IMR-90 (cell line): ENCODE measurements at regions of chr3 and their contacts with region 1.

Region 1: GRCh38 chr3:178443634-178444033 is 92.6 kb upstream of the KCNMB2 start:
- DNase-seq: no peak
- ATAC-seq: no peak; the same call in 1 of the 2 replicates
- H3K4me3 ChIP-seq: no peak overlapping the region
- H3K27ac ChIP-seq: no peak overlapping the region
- H3K4me1 ChIP-seq: no peaks in the 10 kb centered on the region
- H3K27me3 ChIP-seq: peaks cover 2% of the 10 kb centered on the region; the same call in 1 of the 2 replicates
- CTCF ChIP-seq: no peak
- POLR2A ChIP-seq: no peak
- RAD21 ChIP-seq: no peak

Region 2: DNA sequence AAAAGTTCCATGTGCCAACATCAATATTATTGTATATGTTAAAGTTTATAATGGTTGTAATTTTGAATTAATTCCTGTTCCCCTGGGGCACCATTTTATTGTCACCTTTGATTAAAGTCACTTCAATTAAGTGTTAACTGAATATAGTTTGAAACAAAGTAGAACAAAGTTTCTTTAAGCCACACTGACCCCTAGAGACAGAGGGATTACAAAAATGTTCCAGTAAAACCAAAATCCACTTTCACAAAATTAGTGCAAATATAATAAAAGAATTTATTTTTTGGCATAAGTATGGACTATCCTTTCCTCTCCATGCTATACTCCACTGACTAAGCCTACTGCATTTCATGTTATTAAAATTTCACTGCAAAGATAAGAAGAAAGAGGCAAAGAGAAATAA is 504.1 kb after region 1 on chr3:
- CTCF ChIA-PET with region 1: interaction called, 3 read pairs
- POLR2A ChIA-PET with region 1: no interaction called
- dilution Hi-C with region 1: no loop called
- in situ Hi-C with region 1: loop called (anchors 10 kb)
- intact Hi-C with region 1: loop called (anchors 5 kb)
- DNase-seq: no peak
- ATAC-seq: no peak
- H3K4me3 ChIP-seq: no peak overlapping the region
- H3K27ac ChIP-seq: no peak overlapping the region
- H3K4me1 ChIP-seq: no peaks in the 10 kb centered on the region
- H3K27me3 ChIP-seq: no peaks in the 10 kb centered on the region
- CTCF ChIP-seq: 0 out of 2 replicates have a peak, but pooled peaks have one; percentile 16
- POLR2A ChIP-seq: no peak
- RAD21 ChIP-seq: no peak

Region 3: DNA sequence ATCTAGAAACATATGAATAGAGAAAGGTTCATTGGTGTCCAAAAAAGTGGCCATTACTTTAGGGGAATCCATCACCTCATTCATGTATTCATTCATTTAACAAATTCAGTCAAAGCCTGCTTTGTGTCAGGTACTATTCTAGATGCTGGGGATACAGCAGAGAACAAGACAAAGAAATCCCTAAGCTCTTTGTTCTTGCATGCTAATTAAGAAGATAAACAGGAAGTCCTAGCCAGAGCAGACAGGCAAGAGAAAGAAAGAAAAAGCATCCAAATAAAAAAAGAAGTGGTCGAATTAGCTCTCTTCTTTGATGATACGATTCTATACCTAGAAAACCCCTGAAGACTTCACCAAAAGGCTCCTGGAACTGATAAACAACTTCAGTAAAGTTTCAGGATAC is 640.3 kb after region 1 on chr3:
- CTCF ChIA-PET with region 1: no interaction called
- POLR2A ChIA-PET with region 1: no interaction called
- dilution Hi-C with region 1: no loop called
- in situ Hi-C with region 1: no loop called
- intact Hi-C with region 1: no loop called
- DNase-seq: no peak
- ATAC-seq: no peak
- H3K4me3 ChIP-seq: no peak overlapping the region
- H3K27ac ChIP-seq: no peak overlapping the region
- H3K4me1 ChIP-seq: no peaks in the 10 kb centered on the region
- H3K27me3 ChIP-seq: no peaks in the 10 kb centered on the region
- CTCF ChIP-seq: no peak
- POLR2A ChIP-seq: no peak
- RAD21 ChIP-seq: no peak

Region 4: GRCh38 chr3:179309225-179310078 is 865.8 kb after region 1 on chr3:
- CTCF ChIA-PET with region 1: no interaction called
- POLR2A ChIA-PET with region 1: no interaction called
- dilution Hi-C with region 1: no loop called
- in situ Hi-C with region 1: loop called (anchors 10 kb)
- intact Hi-C with region 1: no loop called
- DNase-seq: no peak
- ATAC-seq: no peak
- H3K4me3 ChIP-seq: no peak overlapping the region
- H3K27ac ChIP-seq: no peak overlapping the region
- H3K4me1 ChIP-seq: no peaks in the 10 kb centered on the region
- H3K27me3 ChIP-seq: no peaks in the 10 kb centered on the region
- CTCF ChIP-seq: no peak
- POLR2A ChIP-seq: no peak
- RAD21 ChIP-seq: no peak